GM18951 (cell line): ENCODE measurements at regions of chr6 and their contacts with region 1.

Region 1: GRCh38 chr6:139364302-139364981 is 10.0 kb downstream of the CITED2 start:
- POLR2A ChIP-seq: no peak

Region 2: DNA sequence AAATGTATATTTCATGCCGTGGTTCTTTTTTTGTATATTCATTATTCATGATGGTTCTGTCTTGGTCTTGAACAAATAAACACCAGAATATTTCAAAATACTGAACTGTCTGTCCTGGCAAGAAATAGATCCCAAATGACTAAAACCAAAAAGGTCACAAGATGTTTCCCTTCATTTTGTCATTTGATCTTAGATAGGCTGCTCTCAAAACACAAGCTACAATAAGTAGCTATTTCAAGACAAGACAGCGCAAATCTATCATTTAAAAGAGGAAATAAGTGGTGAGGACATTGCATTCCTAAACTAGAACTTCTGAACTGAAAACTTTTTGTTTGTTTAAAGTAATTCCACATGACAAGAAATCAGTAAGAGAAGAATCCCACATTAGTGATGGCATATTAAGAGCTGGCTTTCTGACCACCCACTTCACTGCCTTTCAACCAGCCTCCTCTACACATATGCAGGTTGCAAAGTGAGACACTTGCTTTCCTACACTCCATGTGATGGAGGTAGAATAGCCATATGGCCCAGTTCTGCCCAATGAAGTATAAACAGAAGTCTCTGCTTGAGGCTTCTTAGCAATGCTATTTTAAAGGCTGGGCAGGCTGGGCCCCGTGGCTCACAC is 645.3 kb before region 1 on chr6:
- in situ Hi-C with region 1: no loop called
- POLR2A ChIP-seq: no peak

Region 3: DNA sequence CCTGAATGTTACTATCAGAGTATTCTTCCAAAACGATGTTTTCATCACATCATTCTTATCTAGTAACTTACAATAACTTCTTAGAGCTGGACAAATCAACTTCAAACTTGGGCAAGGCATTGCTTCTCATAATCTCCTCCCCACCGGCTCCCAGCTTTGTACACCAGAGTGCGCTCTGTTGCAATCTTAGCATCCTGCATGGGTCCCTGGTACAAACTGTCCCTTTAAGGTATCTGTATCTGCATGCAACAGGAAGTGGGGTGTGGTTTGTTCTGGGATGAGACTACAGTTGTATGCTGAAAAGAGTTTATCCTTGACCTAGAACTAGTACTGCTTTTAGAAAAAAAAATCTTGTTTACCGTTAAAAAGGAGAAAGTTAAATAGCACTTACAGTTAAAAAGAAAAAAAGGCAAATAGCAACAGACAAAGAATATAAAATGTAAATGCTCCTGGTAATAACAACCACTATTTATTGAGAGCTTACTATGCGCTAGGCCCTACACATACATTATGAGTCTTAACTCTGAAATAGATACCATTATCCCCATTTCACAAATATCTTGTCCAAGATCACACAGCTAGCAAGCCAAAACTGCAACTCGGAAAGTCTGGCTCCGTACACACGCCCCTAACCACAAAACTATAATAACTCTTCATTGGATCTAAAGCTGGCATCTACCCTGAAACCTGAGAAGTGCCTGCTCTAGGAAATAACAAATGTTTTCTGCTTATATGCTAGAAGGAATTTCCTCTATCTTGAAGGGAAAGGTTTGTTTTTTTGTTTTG is 239.4 kb before region 1 on chr6:
- in situ Hi-C with region 1: loop called (anchors 10 kb)
- POLR2A ChIP-seq: no peak

Region 4: DNA sequence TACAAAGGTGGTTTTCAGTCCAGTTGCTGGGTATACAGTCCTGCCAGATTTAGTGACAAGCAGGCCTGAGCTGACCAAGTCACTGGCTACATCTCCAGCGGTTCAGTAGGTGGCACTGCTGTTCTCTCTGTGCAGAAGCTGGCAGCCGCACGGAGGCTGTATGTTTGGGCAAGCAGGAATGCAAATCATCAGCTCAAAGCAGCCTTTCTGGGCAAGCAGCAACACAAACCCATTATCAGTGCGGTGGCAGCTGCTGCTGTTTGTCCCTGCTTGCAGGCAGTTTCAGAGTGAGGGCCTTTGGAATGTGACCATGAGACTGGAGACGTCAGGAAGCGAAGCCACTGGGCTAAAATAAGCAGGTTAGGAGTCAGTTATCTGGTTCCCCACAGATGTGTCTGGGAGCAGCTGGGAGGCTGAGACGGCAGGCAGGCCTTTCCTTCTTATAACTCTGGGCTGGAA is 145.1 kb before region 1 on chr6:
- in situ Hi-C with region 1: loop called (anchors 10 kb)
- POLR2A ChIP-seq: peak; percentile 19

Region 5: GRCh38 chr6:140078561-140079125 is 714.2 kb after region 1 on chr6:
- in situ Hi-C with region 1: no loop called
- POLR2A ChIP-seq: no peak